GM10248 (cell line): ENCODE measurements at regions of chr1 and their contacts with region 1.

Region 1: GRCh38 chr1:50873458-50874187 is 86.4 kb downstream of the FAF1 start:
- DNase-seq: peak; percentile 62
- CTCF ChIP-seq: peak; percentile 76

Region 2: DNA sequence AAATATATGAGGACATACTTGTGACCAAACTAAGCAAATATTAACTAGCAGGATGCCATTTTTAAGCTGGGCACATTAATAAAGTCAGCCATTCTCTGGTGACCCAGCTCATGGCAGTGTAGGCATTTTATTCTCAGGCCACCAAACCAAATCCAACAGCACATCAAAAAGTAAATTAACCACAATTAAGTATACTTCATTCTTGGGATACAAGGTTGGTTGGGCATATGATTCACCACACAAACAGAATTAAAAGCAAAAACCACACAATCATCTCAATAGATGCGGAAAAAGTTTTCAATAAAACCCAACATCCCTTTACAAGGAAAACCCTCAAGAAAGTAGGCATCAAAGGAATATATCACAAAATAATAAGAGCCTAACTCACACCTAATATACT is 14.9 kb before region 1 on chr1:
- CTCF ChIA-PET with region 1: interaction called, 16 read pairs
- POLR2A ChIA-PET with region 1: no interaction called
- DNase-seq: no peak
- CTCF ChIP-seq: no peak